AG04449 (cell line): ENCODE measurements at regions of chr6 and their contacts with region 1.

Region 1: DNA sequence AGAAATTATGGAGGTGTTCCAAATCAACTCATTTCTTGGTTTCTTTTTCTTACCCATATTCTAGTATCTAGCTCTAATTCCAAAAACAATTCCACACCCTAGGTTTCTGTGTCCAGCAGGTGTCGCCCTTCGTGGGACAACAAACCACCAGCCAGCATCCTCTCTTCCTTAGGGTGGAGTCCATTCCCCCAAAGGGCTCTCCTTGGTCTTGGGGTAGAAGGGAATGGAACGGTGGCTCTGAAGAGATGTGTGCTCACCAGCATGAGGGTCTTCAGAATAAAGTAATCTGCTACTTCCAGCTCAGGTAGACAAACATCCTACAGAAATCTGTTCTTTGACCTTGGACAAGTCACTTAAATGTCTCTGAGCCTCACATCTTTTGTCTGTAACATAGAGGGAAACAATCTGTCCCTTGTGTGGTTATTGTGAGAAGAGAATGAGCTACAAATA is 7.2 kb downstream of the HLA-DMB start:
- DNase-seq: no peak
- H3K4me3 ChIP-seq: no peak overlapping the region
- CTCF ChIP-seq: peak; percentile 73

Region 2: GRCh38 chr6:32894080-32895005 is 39.3 kb before region 1 on chr6:
- CTCF ChIA-PET with region 1: interaction called, 44 read pairs
- POLR2A ChIA-PET with region 1: no interaction called
- DNase-seq: peak; percentile 44
- H3K4me3 ChIP-seq: peak overlapping the region; percentile 77
- CTCF ChIP-seq: no peak

Region 3: GRCh38 chr6:32912951-32913350 is 20.7 kb before region 1 on chr6:
- CTCF ChIA-PET with region 1: interaction called, 39 read pairs
- POLR2A ChIA-PET with region 1: no interaction called
- DNase-seq: no peak
- H3K4me3 ChIP-seq: no peak overlapping the region
- CTCF ChIP-seq: no peak

Region 4: GRCh38 chr6:32947552-32948465 is 14.1 kb after region 1 on chr6:
- CTCF ChIA-PET with region 1: interaction called, 124 read pairs
- POLR2A ChIA-PET with region 1: no interaction called
- DNase-seq: no peak
- H3K4me3 ChIP-seq: no peak overlapping the region
- CTCF ChIP-seq: peak; percentile 46

Region 5: GRCh38 chr6:32984605-32985389 is 51.1 kb after region 1 on chr6:
- CTCF ChIA-PET with region 1: interaction called, 337 read pairs
- POLR2A ChIA-PET with region 1: interaction called, 7 read pairs
- DNase-seq: no peak
- H3K4me3 ChIP-seq: no peak overlapping the region
- CTCF ChIP-seq: peak; percentile 82